ENCODE measurements at regions of chr1 and their contacts with region 1.

Region 1: GRCh38 chr1:6870086-6870485 is 84.8 kb downstream of the CAMTA1 start:
- DNase-seq: no peak
- ATAC-seq: no peak

Region 2: GRCh38 chr1:6811583-6811982 is 58.5 kb before region 1 on chr1:
- intact Hi-C with region 1: loop called in 1 of 2 experiments (anchors 5 kb)
- DNase-seq: no peak
- ATAC-seq: peak; percentile 71 to 73

Region 3: GRCh38 chr1:7646981-7647901 is 777.2 kb after region 1 on chr1:
- intact Hi-C with region 1: no loop called
- DNase-seq: peak; percentile 76
- ATAC-seq: peak in 1 of 2 donors; percentile 48